OCI-LY7 (cell line): ENCODE measurements at regions of chr19 and their contacts with region 1.

Region 1: DNA sequence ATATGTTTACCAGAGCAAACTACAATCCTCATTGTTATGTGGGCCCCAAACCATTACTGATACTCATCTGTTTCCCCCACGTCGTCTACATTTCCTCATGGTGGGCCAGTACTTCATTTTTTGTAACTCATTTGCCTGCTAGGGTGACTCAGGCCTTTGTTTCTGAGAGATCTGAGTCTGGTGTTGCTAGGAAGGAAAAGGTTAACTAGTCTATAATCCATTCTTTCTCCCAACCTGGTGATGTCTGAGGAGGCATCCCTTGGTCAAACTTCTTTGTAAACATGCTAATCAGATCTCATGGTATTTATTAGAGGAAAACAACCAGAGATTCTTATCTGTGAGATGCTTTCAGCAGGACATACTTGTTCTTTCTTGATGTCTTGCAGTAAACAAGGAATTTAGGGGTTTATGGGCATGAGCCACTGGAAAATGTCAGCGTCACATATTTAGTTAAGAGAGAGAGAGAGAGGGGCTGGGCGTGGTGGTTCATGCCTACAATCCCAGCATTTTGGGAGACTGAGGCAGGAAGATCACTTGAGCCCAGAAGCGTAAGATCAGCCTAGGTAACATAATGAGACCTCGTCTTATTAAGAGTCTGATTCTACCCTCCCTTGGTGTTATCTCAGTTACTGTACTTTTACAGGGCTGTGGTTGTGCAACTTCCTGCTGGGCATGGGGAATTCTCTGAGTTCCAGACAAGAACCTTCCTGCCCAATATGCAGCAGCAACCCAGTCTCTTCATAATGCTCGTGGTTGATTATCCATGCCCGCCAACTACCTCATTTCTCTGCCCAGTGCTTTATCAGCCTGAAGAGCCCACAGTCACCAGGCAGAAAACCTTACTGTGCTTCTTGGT is 9.7 kb upstream of the DPRX start:
- DNase-seq: no peak
- H3K4me3 ChIP-seq: no peak overlapping the region
- H3K27ac ChIP-seq: no peak overlapping the region
- H3K4me1 ChIP-seq: no peaks in the 10 kb centered on the region
- CTCF ChIP-seq: no peak

Region 2: GRCh38 chr19:53642381-53643081 is 20.4 kb after region 1 on chr19:
- CTCF ChIA-PET with region 1: no interaction called
- POLR2A ChIA-PET with region 1: no interaction called
- intact Hi-C with region 1: no loop called
- DNase-seq: no peak
- H3K4me3 ChIP-seq: no peak overlapping the region
- H3K27ac ChIP-seq: no peak overlapping the region
- H3K4me1 ChIP-seq: no peaks in the 10 kb centered on the region
- CTCF ChIP-seq: no peak

Region 3: DNA sequence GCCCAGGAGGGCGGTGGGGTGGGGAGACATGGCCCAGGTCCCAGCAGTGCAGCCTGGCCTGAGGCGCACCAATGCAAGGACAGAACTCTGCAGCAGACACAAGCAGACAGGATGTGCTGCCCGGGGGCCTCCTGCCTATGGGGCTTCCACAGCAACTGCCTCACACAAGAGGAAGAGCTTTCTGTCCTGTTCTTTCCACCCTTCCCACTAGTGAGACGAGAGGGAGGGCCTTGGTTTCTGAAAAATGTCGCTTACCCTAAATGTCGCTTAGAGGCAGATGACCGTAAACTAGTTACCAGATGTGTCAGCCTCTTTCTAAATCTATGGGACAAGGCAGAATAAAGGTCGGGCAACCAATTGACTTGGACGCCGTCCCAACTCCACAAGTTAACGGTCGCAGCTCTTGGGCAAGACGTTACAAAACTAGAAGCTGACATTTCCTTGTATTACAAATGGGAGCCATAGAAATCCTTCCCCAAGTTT is 742.7 kb after region 1 on chr19 and contains the start of gene LAIR1:
- CTCF ChIA-PET with region 1: no interaction called
- POLR2A ChIA-PET with region 1: interaction called, 11 read pairs
- intact Hi-C with region 1: no loop called
- DNase-seq: peak; percentile 59
- H3K4me3 ChIP-seq: peak within 1 kb of the TSS; percentile 24
- H3K27ac ChIP-seq: no peak within 1 kb of the TSS
- H3K4me1 ChIP-seq: peaks cover 51% of the 10 kb centered on the region
- CTCF ChIP-seq: no peak
- total RNA-seq, gene LAIR1: not detected in 2 replicates